Head of caudate nucleus (tissue), 42 donors: ENCODE measurements at regions of chr2 and their contacts with region 1.

Region 1: GRCh38 chr2:133780099-133780839 is 212.0 kb upstream of the NCKAP5 start:
- DNase-seq: peak in 37 of 42 donors; percentile 20 to 92 (median 69)

Region 2: DNA sequence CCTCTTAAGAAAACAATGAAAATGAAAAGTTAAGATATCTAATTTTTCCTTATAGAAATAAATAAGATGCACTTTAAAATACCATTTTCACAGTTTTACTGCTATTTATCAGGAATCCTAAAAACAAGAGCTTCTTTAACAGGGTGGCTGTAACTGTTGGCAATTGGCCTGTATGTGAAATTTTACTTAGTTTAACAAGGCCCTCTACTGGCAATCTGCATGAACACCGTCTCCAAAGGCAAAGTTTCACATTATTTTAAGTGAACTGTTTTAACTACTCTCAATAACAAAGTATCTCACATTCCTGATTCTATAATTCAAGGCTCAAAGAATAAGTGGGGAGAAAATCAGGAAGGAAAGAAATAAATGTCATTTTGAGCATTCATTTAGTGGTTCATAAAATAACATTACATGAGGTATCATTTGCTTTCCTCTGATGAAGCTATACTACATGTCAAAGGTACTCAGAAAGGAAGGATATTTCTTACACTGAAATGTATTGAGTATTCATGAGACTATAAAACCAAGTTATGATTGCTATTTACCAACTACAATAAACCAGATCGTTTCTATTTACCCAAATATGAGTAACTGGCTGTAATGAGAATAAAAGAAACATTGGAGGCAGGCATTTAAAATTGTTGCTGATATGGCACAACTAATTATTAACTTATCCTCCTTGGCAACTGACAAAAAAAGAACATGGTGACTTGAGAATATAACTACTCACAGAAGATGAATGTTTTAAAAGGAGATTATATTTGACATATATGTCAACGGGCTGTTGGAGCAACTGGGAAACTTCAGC is 219.0 kb before region 1 on chr2:
- intact Hi-C with region 1: loop called (anchors 10 kb)
- DNase-seq: peak in 17 of 42 donors; percentile 7 to 72 (median 44)

Region 3: DNA sequence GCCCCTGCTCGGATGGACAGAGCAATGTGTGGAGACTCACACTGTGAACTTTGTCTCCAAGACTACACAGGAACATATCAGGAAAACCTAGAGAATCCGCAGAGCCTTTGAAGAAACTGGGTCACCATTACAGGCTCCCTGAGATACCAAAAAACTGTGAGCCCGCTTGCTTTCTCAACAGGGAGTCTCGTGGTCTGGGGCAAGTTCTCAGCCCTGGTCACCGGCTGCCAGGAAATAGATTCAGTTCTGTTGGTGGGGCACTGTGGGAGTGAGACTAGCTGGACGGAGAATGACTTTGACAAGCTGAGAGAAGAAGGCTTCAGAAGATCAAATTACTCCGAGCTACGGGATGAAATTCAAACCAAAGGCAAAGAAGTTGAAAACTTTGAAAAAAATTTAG is 166.3 kb before region 1 on chr2:
- intact Hi-C with region 1: no loop called
- DNase-seq: no peak

Region 4: DNA sequence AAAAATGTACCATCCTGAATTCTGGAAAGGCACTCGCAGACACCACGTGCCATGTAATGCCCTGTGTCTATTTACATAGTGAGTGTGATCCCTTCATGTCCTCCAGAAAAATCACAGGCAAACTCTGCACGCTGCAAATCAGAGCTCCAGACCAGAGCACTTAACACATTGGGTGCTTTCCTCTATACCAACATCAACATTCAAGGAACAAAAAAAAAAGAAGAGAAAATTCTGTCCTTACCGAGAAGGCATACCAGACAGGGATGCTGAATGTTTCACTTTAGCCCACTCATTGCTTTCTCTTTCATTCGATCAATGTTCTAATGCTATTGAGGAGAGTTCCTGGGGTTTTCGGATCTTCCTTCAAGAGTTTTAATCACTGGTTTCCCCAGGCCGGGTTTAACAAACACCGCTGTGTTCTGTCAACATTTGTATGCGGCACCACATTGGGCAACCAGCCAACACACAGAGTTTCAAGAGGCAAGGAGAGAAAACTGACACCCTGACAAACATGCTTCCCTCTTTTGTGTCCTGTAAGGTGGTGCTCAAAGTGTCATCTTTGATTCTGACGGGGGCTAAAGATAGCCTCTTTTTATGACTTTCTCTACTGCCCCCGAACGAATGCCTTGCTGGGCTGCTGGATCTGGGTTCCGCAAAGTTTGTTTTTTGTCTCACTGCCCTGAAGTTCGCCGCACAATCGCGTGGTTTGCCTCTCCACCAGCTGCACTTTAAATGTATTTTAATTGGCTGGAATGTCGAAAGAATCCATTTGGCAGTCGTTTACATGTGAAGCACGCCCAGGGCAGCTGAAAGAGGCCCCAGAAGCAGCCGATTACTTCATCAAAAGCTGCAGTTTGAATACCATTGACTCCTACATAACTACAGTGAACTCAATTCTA is 105.6 kb before region 1 on chr2:
- intact Hi-C with region 1: loop called (anchors 10 kb)
- DNase-seq: peak; percentile 50 to 93 (median 80)